ENCODE measurements at regions of chr3 and their contacts with region 1.

Region 1: DNA sequence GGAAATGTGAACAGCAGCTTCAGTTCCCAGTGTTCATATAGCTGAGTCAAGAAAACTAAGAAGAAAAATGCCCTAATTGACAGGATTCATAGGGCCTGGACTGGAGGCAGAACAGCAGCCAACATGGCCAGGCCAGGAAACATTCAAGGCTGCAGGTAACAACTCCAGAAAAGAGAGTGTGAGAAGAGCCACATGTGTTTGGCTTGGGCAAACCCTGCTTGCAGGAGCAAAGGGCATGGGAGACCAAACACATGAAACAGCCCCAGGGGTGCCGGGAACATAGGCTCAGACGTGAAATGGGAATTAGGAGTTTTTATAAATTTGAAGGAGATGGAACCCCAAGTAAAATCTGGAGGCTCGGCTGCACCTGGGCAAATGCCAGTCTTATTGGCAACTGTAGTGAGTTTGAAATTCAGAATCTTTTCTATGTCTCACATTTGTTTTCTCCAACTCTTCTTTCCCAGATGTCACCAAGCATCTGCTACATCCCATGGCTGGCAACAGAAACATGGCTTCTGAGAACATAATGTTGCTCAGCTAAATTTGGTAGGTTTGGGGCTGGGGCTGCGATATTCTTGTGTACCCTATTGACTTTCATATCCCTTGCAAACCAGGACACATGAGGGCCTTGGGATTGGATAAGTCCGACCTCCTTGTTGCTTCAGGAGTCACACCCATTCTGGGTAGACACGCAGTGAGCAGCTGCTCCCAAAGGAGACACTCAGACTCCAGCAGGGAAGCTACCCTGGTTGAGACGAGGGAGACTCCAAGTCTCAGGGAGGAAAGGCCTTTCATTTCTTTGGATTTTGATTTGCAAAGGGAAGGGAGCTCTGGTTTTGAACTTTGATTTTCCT is 98.9 kb upstream of the CLSTN2 start:
- DNase-seq: no peak
- ATAC-seq: peak; percentile 32

Region 2: GRCh38 chr3:139695426-139696313 is 140.4 kb before region 1 on chr3:
- intact Hi-C with region 1: no loop called
- DNase-seq: no peak
- ATAC-seq: no peak

Region 3: GRCh38 chr3:139893267-139893962 is 57.4 kb after region 1 on chr3:
- intact Hi-C with region 1: loop called (anchors 5 kb)
- DNase-seq: no peak
- ATAC-seq: peak; percentile 82